ENCODE measurements at regions of chr3 and their contacts with region 1.

Region 1: DNA sequence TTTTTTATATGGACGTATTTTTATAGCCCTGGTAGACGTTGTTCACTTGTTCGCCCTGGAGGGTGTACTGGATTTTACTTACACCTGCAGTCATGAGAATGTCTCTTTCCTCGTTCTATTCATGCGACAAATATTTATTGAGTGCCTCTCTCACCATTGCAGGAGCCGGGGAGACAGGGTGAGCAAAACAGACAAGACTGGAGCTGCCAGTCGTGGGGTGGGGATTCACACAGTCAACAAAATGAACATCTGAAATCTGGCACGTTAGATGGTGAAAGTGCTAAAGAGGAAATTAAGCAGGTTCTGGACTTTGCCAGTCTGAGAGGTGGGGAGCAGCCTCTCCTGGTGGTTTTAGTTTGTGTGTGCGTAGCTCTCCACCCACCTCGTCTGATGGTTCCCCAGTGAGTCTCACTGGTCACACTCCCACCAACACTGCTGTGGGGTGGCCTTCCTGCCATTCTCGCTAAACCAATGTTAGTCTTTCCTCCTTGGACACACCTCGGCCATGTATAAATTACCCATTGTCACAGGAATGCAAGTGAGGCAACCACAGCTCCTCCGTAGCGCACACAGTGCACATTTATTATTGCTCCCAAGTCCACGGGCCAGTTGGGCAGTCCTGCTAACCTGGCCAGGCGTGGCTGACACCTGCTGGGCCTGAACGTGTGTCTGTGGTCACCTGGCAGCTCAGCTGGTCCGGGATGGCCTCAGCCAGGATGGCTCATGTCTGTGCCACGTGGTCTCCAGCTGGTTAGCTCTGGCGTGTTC is 31.5 kb downstream of the FBLN2 start:
- DNase-seq: peak; percentile 69 to 91
- H3K4me3 ChIP-seq: no peak overlapping the region; the same call in 1 of the 2 replicates
- H3K27ac ChIP-seq: peak overlapping the region; percentile 72
- H3K4me1 ChIP-seq: peaks cover 31% of the 10 kb centered on the region
- H3K27me3 ChIP-seq: no peaks in the 10 kb centered on the region
- CTCF ChIP-seq: no peak

Region 2: DNA sequence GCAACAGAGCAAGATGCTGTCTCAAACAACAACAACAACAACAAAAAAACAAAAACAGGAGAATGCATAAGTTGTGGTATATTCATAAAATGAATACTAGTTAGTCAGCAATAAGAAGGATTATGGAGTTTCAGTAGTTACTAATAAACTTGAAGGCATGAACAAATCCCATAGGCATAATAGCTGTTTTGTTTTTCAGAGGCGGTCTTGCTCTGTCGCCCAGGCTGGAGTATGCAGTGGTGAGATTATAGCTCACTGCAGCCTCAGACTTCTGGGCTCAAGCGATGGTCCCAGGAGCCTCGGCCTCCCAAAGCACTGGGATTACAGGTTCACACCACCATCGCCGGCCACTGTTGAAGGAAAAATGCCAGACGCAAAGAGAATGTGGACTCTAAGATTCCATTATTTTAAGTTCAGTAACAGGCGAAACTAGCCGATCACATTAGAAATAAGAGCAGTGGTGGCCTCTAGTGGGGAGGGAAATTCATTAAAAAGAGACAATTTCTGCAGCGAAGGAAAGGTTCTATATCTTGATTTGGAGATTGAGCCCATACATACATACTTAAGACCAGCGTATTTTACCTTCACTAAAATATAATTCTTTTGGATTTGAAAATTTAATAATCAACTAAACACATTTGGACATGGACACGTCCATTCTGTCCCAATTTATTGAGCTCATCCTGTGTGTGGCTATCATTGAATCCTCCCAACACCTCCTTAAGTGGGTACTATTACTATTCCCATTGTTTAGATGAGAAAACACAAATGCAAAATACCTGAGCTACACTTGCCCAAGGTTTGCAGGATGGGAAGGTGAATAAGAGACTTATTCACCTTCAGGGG is 127.7 kb before region 1 on chr3:
- CTCF ChIA-PET with region 1: no interaction called
- POLR2A ChIA-PET with region 1: no interaction called
- intact Hi-C with region 1: no loop called
- DNase-seq: peak; percentile 25 to 43
- H3K4me3 ChIP-seq: peak overlapping the region; percentile 59; the same call in 1 of the 2 replicates
- H3K27ac ChIP-seq: peak overlapping the region; percentile 71
- H3K4me1 ChIP-seq: peaks cover 13% of the 10 kb centered on the region
- H3K27me3 ChIP-seq: no peaks in the 10 kb centered on the region
- CTCF ChIP-seq: peak; percentile 77

Region 3: DNA sequence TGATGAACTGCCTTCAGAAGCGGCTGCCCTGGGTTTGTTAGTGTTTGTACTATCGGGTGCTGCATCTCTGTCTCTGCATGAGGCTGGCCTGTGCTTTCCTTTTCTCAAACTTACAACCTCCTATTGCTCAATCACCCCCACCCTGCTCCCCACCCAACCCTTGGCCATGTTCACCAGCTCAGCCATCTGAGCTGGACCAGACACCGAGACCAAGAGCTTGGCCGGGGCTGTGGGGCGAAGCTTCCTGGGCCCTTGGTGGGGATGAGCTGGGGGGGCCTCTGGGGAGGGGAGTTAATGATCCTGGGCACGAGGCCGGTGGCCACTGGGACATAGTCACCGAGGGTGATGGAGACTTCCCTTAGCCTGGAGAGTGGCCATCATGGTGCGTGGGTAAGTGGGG is 48.3 kb before region 1 on chr3:
- CTCF ChIA-PET with region 1: no interaction called
- POLR2A ChIA-PET with region 1: no interaction called
- intact Hi-C with region 1: loop called (anchors 1 kb)
- DNase-seq: no peak
- H3K4me3 ChIP-seq: no peak overlapping the region
- H3K27ac ChIP-seq: no peak overlapping the region
- H3K4me1 ChIP-seq: peaks cover 56% of the 10 kb centered on the region
- H3K27me3 ChIP-seq: no peaks in the 10 kb centered on the region
- CTCF ChIP-seq: no peak

Region 4: GRCh38 chr3:13648060-13649001 is 67.9 kb after region 1 on chr3:
- CTCF ChIA-PET with region 1: no interaction called
- POLR2A ChIA-PET with region 1: no interaction called
- intact Hi-C with region 1: loop called (anchors 1 kb)
- DNase-seq: peak; percentile 54 to 85
- H3K4me3 ChIP-seq: no peak overlapping the region
- H3K27ac ChIP-seq: no peak overlapping the region
- H3K4me1 ChIP-seq: peaks cover 47% of the 10 kb centered on the region
- H3K27me3 ChIP-seq: no peaks in the 10 kb centered on the region
- CTCF ChIP-seq: peak; percentile 99